ENCODE measurements at regions of chr7 and their contacts with region 1.

Region 1: DNA sequence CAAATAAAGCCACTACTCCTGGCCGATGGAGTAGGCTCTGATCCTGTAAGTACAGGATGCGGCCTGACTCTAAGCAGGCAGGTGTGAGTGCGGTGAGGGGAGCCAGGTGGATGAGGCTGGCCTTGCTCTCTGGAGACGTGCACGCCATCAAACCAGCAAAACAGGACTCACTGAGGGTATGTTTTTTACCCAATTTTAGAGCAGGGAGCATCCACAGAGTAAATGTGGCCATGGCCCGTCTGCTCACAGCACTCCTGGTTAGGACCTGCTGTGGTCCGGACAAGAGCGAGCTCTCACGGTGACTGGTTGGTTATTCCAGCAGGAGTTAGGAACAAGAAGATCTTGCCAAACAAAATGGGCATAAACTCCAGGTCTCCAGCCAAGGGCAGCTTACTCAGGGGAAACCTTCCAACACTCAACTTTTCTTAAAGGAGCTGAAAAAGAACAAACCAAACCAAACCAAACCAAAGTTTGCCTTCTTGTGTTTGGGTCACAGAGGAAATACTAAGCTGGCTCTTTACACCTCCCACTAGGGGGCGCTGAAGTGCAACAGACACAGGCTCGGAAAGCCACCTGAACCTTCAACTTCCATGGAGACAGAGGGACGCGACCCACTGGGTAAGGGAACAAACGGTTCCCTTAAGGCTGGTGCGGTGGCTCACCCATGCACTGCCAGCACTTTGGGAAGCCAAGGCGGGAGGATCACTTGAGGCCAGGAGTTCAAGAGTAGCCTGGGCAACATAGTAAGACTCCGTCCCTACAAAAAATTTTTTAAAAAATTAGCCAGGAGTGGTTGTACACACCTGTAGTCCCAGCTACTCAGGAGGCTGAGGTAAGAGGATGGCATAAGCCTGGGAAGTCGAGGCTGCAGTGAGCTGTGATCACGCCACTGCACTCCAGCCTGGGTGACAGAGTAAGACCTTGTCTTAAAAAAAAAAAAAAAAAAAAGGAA is 122.4 kb downstream of the CLEC2L start:
- DNase-seq: peak; percentile 75 to 89 (median 84)
- ATAC-seq: peak; percentile 84 to 86 (median 86)
- H3K4me3 ChIP-seq: no peak overlapping the region
- H3K27ac ChIP-seq: no peak overlapping the region
- H3K4me1 ChIP-seq: peaks cover 8 to 38% (median 16%) of the 10 kb centered on the region in 3 donors
- H3K27me3 ChIP-seq: no peaks in the 10 kb centered on the region
- CTCF ChIP-seq: peak; percentile 79 to 90 (median 88)

Region 2: GRCh38 chr7:139598445-139599049 is 47.3 kb before region 1 on chr7:
- intact Hi-C with region 1: no loop called
- DNase-seq: peak in 2 of 6 donors; percentile 16 to 34
- ATAC-seq: peak; percentile 61 to 81 (median 69)
- H3K4me3 ChIP-seq: no peak overlapping the region
- H3K27ac ChIP-seq: no peak overlapping the region
- H3K4me1 ChIP-seq: peaks cover 6 to 8% (median 7%) of the 10 kb centered on the region in 3 donors
- H3K27me3 ChIP-seq: no peaks in the 10 kb centered on the region
- CTCF ChIP-seq: no peak

Region 3: GRCh38 chr7:139680676-139681462 is 35.0 kb after region 1 on chr7:
- intact Hi-C with region 1: no loop called
- DNase-seq: no peak
- ATAC-seq: peak in 3 of 4 donors; percentile 35 to 51 (median 48)
- H3K4me3 ChIP-seq: no peak overlapping the region
- H3K27ac ChIP-seq: peak overlapping the region; percentile 4 to 78 (median 72)
- H3K4me1 ChIP-seq: peaks cover 12 to 25% (median 24%) of the 10 kb centered on the region in 3 donors
- H3K27me3 ChIP-seq: no peaks in the 10 kb centered on the region
- CTCF ChIP-seq: no peak

Region 4: DNA sequence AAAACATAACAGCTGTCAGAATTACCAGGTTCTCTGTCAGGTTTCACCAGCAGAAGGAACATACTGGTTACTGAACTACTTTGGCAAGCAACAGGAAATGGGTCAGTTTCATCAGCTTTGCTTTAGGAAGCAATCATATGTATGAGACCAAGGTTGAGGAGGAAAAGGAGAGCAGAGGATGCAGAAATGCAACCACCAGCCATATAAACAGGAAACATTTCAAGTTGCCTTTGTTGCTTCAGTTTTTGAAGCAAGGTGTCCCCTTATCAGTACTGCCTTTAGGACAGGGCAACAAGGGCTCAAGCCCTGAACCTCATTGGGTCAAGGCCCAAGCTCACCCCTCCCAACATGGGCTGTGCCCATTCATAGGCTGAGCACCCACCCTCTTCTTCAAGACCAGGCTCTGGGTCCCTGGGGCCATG is 121.7 kb after region 1 on chr7:
- intact Hi-C with region 1: loop called in 2 of 3 experiments (anchors 10 kb)
- DNase-seq: no peak
- ATAC-seq: no peak
- H3K4me3 ChIP-seq: no peak overlapping the region
- H3K27ac ChIP-seq: no peak overlapping the region
- H3K4me1 ChIP-seq: peaks cover 0 to 36% (median 25%) of the 10 kb centered on the region in 3 donors
- H3K27me3 ChIP-seq: no peaks in the 10 kb centered on the region
- CTCF ChIP-seq: no peak

Region 5: GRCh38 chr7:139777948-139778841 is 132.3 kb after region 1 on chr7 and contains the start of gene HIPK2:
- intact Hi-C with region 1: loop called in 1 of 3 experiments (anchors 10 kb)
- DNase-seq: peak; percentile 67 to 88 (median 80)
- ATAC-seq: peak; percentile 72 to 85 (median 74)
- H3K4me3 ChIP-seq: peak within 1 kb of the TSS; percentile 49 to 93 (median 88)
- H3K27ac ChIP-seq: peak within 1 kb of the TSS; percentile 57 to 92 (median 80)
- H3K4me1 ChIP-seq: peaks cover 5 to 21% (median 13%) of the 10 kb centered on the region in 3 donors
- H3K27me3 ChIP-seq: no peaks in the 10 kb centered on the region
- CTCF ChIP-seq: no peak
- total RNA-seq, gene HIPK2: 21.4 to 49.0 (median 26.5) TPM

Region 6: GRCh38 chr7:139995017-139995931 is 349.4 kb after region 1 on chr7:
- intact Hi-C with region 1: loop called in 2 of 3 experiments (anchors 5 kb)
- DNase-seq: peak in 4 of 6 donors; percentile 25 to 53 (median 38)
- ATAC-seq: peak; percentile 48 to 85 (median 74)
- H3K4me3 ChIP-seq: no peak overlapping the region
- H3K27ac ChIP-seq: no peak overlapping the region
- H3K4me1 ChIP-seq: no peaks in the 10 kb centered on the region
- H3K27me3 ChIP-seq: no peaks in the 10 kb centered on the region
- CTCF ChIP-seq: no peak

Region 7: GRCh38 chr7:140003913-140004382 is 358.1 kb after region 1 on chr7:
- intact Hi-C with region 1: loop called in 2 of 3 experiments (anchors 5 kb)
- DNase-seq: peak in 2 of 6 donors; percentile 17 to 33
- ATAC-seq: peak in 2 of 4 donors; percentile 17 to 31
- H3K4me3 ChIP-seq: no peak overlapping the region
- H3K27ac ChIP-seq: no peak overlapping the region
- H3K4me1 ChIP-seq: peaks cover 0 to 5% (median 0%) of the 10 kb centered on the region in 3 donors
- H3K27me3 ChIP-seq: no peaks in the 10 kb centered on the region
- CTCF ChIP-seq: peak in 1 of 4 donors; percentile 28

Measured in pancreas (tissue), 10 donors.